Activated CD4-positive, alpha-beta T cell treated with anti-CD3 and anti-CD28 coated beads for 36 hours (primary cell): ENCODE measurements at regions of chr1 and their contacts with region 1.

Region 1: GRCh38 chr1:205658943-205659581 is 21.2 kb downstream of the SLC45A3 start:
- DNase-seq: peak; percentile 88
- ATAC-seq: peak; percentile 99
- H3K4me3 Mint-ChIP-seq: no peak overlapping the region
- H3K27ac Mint-ChIP-seq: no peak overlapping the region
- H3K4me1 Mint-ChIP-seq: no peaks in the 10 kb centered on the region
- H3K27me3 Mint-ChIP-seq: no peaks in the 10 kb centered on the region

Region 2: GRCh38 chr1:205396967-205397616 is 262.0 kb before region 1 on chr1:
- CTCF ChIA-PET with region 1: interaction called, 7 read pairs
- POLR2A ChIA-PET with region 1: no interaction called
- intact Hi-C with region 1: loop called in 1 of 2 experiments (anchors 10 kb)
- DNase-seq: peak; percentile 38
- ATAC-seq: peak; percentile 68
- H3K4me3 Mint-ChIP-seq: no peak overlapping the region
- H3K27ac Mint-ChIP-seq: no peak overlapping the region
- H3K4me1 Mint-ChIP-seq: no peaks in the 10 kb centered on the region
- H3K27me3 Mint-ChIP-seq: peaks cover 6% of the 10 kb centered on the region

Region 3: GRCh38 chr1:205528887-205529825 is 129.9 kb before region 1 on chr1:
- CTCF ChIA-PET with region 1: interaction called, 48 read pairs
- POLR2A ChIA-PET with region 1: no interaction called
- intact Hi-C with region 1: loop called (anchors 1 kb)
- DNase-seq: peak; percentile 91
- ATAC-seq: peak; percentile 90
- H3K4me3 Mint-ChIP-seq: no peak overlapping the region
- H3K27ac Mint-ChIP-seq: no peak overlapping the region
- H3K4me1 Mint-ChIP-seq: no peaks in the 10 kb centered on the region
- H3K27me3 Mint-ChIP-seq: no peaks in the 10 kb centered on the region

Region 4: DNA sequence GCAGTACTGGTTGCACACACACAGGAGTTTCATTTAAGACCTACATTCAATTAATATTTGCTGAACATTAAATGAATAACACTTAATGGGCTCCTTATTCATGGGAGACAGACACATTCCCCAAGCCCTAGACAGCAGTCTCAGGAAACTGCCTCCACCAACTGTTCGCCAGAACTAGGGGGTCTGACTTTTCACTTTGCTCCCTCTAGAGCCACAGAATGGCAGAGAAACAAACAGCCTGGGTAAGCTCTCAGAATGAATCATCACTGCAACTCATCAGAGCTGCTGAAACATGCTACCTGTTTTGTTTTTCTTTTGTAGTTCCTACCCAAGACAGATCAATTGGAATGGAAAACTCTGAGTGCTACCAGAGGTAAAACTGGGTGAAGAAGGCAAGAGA is 59.0 kb before region 1 on chr1:
- CTCF ChIA-PET with region 1: interaction called, 346 read pairs
- POLR2A ChIA-PET with region 1: no interaction called
- intact Hi-C with region 1: no loop called
- DNase-seq: peak; percentile 40
- ATAC-seq: peak; percentile 93
- H3K4me3 Mint-ChIP-seq: no peak overlapping the region
- H3K27ac Mint-ChIP-seq: peak overlapping the region; percentile 83
- H3K4me1 Mint-ChIP-seq: peaks cover 40% of the 10 kb centered on the region
- H3K27me3 Mint-ChIP-seq: no peaks in the 10 kb centered on the region

Region 5: DNA sequence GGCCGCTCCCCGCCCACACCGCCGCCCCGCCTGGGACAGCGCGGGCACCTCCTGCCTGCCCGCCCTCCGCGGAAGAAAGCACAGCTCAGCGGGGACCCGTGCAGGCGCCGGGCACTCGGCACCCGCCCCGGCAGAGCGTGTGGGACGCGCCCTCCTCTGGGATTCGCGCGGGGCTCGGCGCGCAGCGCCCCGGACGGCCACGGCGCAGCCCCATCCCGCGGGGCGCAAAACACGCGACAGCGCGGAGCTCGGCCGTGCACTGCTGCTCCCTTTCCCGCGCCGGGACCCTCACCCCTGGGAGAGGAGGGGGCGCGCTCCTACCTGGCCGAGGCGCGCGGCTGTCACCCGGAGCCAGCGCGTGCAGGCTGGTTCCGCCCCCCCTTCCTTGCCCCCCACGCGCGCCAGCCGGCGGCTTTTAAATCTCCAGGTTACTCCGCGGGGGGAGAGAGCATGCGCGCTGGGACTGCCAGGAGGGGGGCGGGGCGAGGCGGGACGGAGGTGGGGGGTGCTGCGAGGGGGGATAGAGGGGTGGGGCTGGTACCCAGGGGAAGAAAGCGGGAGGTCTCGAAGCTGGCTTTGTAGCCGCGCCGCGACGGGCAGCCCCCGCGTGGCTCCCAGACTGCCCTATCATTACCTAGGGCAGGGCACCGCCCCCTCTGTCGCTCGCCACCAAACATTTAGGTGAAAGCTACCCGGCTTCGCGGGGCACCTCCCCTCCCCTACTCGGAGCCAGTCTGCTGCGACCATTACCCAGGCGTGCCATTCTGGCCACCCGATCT is 21.2 kb after region 1 on chr1 and contains the start of gene SLC45A3:
- CTCF ChIA-PET with region 1: interaction called, 47 read pairs
- POLR2A ChIA-PET with region 1: no interaction called
- intact Hi-C with region 1: no loop called
- DNase-seq: peak; percentile 51
- ATAC-seq: peak; percentile 79
- H3K4me3 Mint-ChIP-seq: peak within 1 kb of the TSS; percentile 66
- H3K27ac Mint-ChIP-seq: no peak within 1 kb of the TSS
- H3K4me1 Mint-ChIP-seq: peaks cover 8% of the 10 kb centered on the region
- H3K27me3 Mint-ChIP-seq: peaks cover 17% of the 10 kb centered on the region
- total RNA-seq, gene SLC45A3: 0.32 to 0.53 TPM

Region 6: GRCh38 chr1:205729945-205730610 is 71.0 kb after region 1 on chr1:
- CTCF ChIA-PET with region 1: interaction called, 25 read pairs
- POLR2A ChIA-PET with region 1: no interaction called
- intact Hi-C with region 1: no loop called
- DNase-seq: no peak
- ATAC-seq: no peak
- H3K4me3 Mint-ChIP-seq: no peak overlapping the region
- H3K27ac Mint-ChIP-seq: peak overlapping the region; percentile 16
- H3K4me1 Mint-ChIP-seq: peaks cover 34% of the 10 kb centered on the region
- H3K27me3 Mint-ChIP-seq: no peaks in the 10 kb centered on the region

Region 7: DNA sequence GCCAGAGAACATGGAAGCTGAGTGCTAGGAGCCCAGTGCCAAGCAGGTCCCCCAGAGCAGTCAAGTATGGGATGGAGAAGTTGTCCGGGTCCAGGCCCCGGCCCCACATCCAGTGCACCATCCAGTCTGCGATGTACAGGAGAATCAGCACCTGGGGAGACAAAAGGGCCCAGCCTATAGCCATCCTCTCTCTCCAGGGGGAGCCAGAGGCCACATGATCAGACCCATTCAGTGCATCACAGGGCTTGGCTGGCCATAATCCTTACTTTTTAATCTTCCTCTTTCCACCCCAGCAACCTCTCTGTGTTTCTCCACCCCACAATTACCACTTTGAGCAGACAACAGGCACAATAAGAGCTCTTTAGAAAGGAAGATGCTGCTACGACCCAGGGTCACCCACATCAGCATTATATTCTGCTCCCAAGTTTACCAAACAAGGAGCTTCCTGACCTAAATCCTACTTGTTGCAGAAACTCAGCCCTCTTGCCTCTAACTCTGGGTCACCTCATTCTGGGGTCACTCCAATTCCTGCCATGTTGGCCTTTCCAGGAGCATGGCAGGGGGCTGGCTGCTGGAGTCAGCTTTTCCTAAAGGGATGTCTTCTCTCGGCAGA is 132.6 kb after region 1 on chr1:
- CTCF ChIA-PET with region 1: interaction called, 4 read pairs
- POLR2A ChIA-PET with region 1: no interaction called
- intact Hi-C with region 1: loop called in 1 of 2 experiments (anchors 5 kb)
- DNase-seq: peak; percentile 75
- ATAC-seq: peak; percentile 99
- H3K4me3 Mint-ChIP-seq: no peak overlapping the region
- H3K27ac Mint-ChIP-seq: no peak overlapping the region
- H3K4me1 Mint-ChIP-seq: no peaks in the 10 kb centered on the region
- H3K27me3 Mint-ChIP-seq: no peaks in the 10 kb centered on the region

Region 8: DNA sequence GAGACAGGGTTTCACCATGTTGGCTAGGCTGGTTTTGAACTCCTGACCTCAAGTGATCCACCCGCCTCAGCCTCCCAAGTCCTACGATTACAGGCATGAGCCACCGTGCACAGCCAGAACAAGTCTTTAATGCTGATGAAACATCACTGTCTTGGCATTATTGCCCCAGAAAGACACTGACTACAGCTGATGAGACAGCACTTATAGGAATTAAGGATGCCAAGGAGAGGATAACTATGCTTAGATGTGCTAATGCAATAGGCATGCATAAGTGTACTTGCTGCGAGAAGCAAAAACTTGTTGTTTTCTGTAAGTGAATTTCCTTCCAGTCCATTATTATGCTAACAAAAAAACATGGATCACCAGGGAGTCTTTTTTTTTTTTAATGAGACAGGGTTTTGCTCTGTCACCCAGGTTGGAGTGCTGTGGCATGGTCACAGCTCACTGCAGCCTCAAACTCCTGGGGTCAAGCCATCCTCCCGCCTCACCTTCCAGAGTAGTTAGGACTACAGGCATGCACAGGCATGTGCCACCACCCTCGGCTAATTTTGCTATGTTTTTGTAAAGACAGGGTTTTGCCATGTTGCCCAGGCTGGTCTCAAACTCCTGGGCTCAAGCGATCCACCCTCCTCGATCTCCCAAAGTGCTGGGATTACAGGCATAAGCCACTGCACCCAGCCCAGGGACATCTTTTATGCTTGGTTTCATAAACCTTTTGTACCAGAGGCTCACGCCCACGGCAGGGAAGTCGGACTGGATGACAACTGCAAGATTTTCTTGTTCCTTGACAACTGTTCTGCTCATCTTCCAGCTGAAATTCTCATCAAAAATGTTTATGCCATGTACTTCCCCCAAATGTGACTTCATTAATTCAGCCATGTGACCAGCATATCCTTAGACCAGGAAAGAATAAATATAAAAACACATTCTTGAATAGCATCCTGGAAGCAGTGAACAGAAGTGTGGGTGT is 417.0 kb after region 1 on chr1:
- CTCF ChIA-PET with region 1: no interaction called
- POLR2A ChIA-PET with region 1: no interaction called
- intact Hi-C with region 1: no loop called
- DNase-seq: no peak
- ATAC-seq: no peak
- H3K4me3 Mint-ChIP-seq: no peak overlapping the region
- H3K27ac Mint-ChIP-seq: no peak overlapping the region
- H3K4me1 Mint-ChIP-seq: peaks cover 17% of the 10 kb centered on the region
- H3K27me3 Mint-ChIP-seq: no peaks in the 10 kb centered on the region